Activated CD4-positive, alpha-beta T cell treated with anti-CD3 and anti-CD28 coated beads, Interleukin-2, amount 10 ng/mL, durations not matched to agents 24 days and 14 days (primary cell): ENCODE measurements at regions of chr4 and their contacts with region 1.

Region 1: GRCh38 chr4:182806259-182807252 is 110.6 kb downstream of the DCTD start:
- DNase-seq: peak; percentile 90
- H3K4me3 Mint-ChIP-seq: peak overlapping the region; percentile 74
- H3K27ac Mint-ChIP-seq: no peak overlapping the region
- H3K4me1 Mint-ChIP-seq: peaks cover 14% of the 10 kb centered on the region
- H3K27me3 Mint-ChIP-seq: peaks cover 18% of the 10 kb centered on the region

Region 2: DNA sequence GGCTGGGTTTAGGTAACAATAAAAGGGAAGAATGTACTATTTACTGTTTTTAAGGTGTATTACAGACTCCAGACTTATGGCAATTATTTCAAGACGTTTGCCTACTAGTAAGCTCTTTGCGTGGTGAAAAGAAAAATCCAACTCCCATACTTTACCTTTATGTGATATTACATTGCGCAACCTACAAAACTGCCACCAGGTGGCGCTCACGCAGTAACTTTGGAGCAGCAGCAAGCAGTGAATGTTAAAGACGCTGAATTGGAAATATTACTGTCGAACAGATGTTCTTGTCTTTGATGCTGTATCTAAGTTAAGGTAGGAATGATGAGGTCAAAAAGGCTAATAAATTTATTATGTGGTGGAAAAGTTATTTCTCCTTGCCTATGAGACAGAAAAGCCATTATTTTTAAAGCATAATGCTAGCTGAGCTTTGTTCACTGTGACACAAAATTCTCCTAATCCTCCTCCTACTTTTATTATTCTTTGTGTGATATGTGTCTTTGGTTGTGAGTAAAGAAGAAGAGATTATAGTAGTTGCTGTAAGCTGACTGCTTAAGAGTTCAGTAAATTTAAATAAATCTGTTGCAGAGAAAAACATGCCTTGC is 1663.2 kb before region 1 on chr4:
- intact Hi-C with region 1: loop called (anchors 5 kb)
- DNase-seq: peak; percentile 88
- H3K4me3 Mint-ChIP-seq: no peak overlapping the region
- H3K27ac Mint-ChIP-seq: no peak overlapping the region
- H3K4me1 Mint-ChIP-seq: no peaks in the 10 kb centered on the region
- H3K27me3 Mint-ChIP-seq: no peaks in the 10 kb centered on the region

Region 3: GRCh38 chr4:182478475-182478874 is 328.1 kb before region 1 on chr4:
- intact Hi-C with region 1: loop called (anchors 1 kb)
- DNase-seq: no peak
- H3K4me3 Mint-ChIP-seq: no peak overlapping the region
- H3K27ac Mint-ChIP-seq: no peak overlapping the region
- H3K4me1 Mint-ChIP-seq: no peaks in the 10 kb centered on the region
- H3K27me3 Mint-ChIP-seq: peaks cover 2% of the 10 kb centered on the region

Region 4: DNA sequence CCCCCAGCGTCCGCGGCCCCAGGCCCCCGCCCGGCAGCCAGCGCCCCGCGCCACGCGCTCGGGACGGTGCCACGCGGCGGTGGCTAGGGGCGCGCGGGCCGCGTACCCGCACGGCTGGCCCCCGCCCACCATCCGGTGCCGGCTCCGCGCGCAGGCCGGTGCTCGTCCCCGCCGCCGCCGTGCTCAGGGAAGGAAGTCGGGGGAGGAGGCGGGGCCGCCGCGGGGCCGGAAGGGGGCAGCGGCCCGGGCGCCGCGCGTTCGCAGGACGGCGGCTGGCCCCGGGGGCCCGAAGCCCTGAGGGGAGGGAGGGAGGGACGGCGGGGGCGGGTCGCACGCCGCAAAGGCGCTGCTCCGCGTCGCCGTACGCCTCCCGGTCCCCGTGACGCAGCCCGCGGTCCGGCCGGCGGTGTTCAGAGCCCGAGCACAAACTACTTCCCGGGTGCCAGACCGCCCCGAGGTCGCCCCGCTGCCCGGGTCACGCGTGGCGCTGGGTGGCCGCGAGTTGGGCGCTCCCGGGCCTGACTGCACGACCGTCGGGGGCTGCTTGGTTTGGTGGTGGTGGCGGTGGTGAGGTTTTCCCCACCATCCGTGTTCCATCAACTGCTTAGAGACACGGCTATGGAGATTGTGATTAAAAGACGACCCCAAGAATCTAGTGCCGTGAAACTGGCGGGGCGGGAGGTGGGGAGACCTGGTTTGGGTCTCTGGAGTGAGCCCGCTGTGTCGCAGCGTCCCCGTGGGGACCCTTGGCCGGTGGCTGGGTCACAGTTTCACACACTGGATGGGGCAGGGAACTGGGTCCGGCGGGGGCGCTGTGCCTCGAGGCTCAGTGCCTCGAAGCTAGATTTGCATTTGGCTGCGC is 110.9 kb after region 1 on chr4 and contains the start of gene DCTD:
- intact Hi-C with region 1: loop called (anchors 1 kb)
- DNase-seq: peak; percentile 95
- H3K4me3 Mint-ChIP-seq: peak within 1 kb of the TSS; percentile 87
- H3K27ac Mint-ChIP-seq: peak within 1 kb of the TSS; percentile 93
- H3K4me1 Mint-ChIP-seq: peaks cover 44% of the 10 kb centered on the region
- H3K27me3 Mint-ChIP-seq: peaks cover 5% of the 10 kb centered on the region
- total RNA-seq, gene DCTD: 125 and 129 TPM in 2 replicates

Region 5: GRCh38 chr4:183610033-183610432 is 803.5 kb after region 1 on chr4:
- intact Hi-C with region 1: no loop called
- DNase-seq: no peak
- H3K4me3 Mint-ChIP-seq: no peak overlapping the region
- H3K27ac Mint-ChIP-seq: no peak overlapping the region
- H3K4me1 Mint-ChIP-seq: no peaks in the 10 kb centered on the region
- H3K27me3 Mint-ChIP-seq: peaks cover 9% of the 10 kb centered on the region